ENCODE measurements at regions of chr6 and their contacts with region 1.

Region 1: GRCh38 chr6:109187399-109188114 is 92.2 kb downstream of the CEP57L1 start:
- DNase-seq: peak; percentile 87
- H3K4me3 Mint-ChIP-seq: no peak overlapping the region
- H3K27ac Mint-ChIP-seq: no peak overlapping the region
- H3K4me1 Mint-ChIP-seq: no peaks in the 10 kb centered on the region
- H3K27me3 Mint-ChIP-seq: peaks cover 36% of the 10 kb centered on the region

Region 2: DNA sequence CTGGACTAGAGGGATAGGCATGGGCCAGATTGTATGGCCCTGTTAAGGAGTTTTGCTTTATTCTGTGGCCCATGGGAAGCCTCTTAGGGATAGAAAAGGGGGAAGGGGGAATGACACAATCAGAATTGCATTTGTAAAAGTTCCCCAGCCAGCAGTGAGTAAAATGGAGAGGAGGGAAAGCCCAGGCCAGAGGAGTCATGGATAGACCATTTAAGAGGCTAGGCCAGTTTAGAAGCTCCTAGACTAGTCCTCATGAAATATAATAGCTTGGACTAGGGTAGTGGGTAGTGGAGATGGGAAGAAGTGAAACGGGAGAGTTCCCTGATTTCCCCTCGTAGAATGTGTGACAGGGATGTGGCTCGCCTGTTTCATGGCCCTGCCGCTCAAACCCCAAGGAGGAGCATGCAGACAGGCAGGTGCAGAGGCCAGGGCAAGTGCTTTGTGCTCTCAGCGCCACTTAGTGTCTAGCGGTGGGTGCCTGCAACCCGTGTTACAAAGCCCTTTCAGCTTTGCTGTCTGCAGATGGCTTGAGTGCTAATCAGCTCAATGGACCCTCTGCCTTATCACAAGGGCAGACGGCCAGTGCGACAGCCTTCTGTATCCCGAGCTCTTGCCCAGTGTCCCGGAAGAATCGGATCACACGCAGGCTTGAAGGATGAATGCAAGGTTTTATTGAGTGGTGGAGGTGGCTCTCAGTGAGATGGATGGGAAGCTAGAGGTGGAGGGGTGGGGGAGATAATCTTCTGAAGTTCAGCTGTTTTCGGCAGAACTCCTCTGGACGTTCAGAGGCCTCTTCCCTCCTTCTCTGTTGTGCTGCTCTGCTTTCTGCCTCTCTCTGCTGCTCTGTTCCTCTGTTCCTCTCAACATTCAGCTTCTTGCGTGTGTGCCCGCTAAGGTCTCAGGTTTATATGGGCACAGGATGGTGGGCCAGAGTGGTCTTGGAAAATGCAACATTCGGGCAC is 48.8 kb after region 1 on chr6:
- intact Hi-C with region 1: loop called (anchors 5 kb)
- DNase-seq: peak; percentile 83
- H3K4me3 Mint-ChIP-seq: peak overlapping the region; percentile 51
- H3K27ac Mint-ChIP-seq: peak overlapping the region; percentile 88
- H3K4me1 Mint-ChIP-seq: peaks cover 21% of the 10 kb centered on the region
- H3K27me3 Mint-ChIP-seq: no peaks in the 10 kb centered on the region

Region 3: GRCh38 chr6:109440331-109441068 is 252.9 kb after region 1 on chr6 and contains the starts of genes PPIL6 and SMPD2:
- intact Hi-C with region 1: loop called (anchors 2 kb)
- DNase-seq: peak; percentile 95
- H3K4me3 Mint-ChIP-seq: peak within 1 kb of the TSS; percentile 97
- H3K27ac Mint-ChIP-seq: peak within 1 kb of the TSS; percentile 96
- H3K4me1 Mint-ChIP-seq: peaks cover 27% of the 10 kb centered on the region
- H3K27me3 Mint-ChIP-seq: peaks cover 2% of the 10 kb centered on the region
- total RNA-seq, gene PPIL6: not detected in 2 replicates
- total RNA-seq, gene SMPD2: 18.2 and 20.5 TPM in 2 replicates

Measured in activated CD4-positive, alpha-beta T cell treated with anti-CD3 and anti-CD28 coated beads, Interleukin-2, amount 10 ng/mL, durations not matched to agents 24 days and 14 days (primary cell).